Sciatic nerve (tissue), 2 donors: ENCODE measurements at regions of chr17 and their contacts with region 1.

Region 1: GRCh38 chr17:64129764-64130558 is at the start of gene ERN1:
- DNase-seq: peak; percentile 95
- ATAC-seq: peak; percentile 98
- total RNA-seq, gene ERN1: 22.2 TPM

Region 2: GRCh38 chr17:63881876-63882601 is 247.9 kb before region 1 on chr17 and contains the start of gene GH2:
- intact Hi-C with region 1: no loop called
- DNase-seq: no peak
- ATAC-seq: peak; percentile 60
- total RNA-seq, gene GH2: not detected

Region 3: DNA sequence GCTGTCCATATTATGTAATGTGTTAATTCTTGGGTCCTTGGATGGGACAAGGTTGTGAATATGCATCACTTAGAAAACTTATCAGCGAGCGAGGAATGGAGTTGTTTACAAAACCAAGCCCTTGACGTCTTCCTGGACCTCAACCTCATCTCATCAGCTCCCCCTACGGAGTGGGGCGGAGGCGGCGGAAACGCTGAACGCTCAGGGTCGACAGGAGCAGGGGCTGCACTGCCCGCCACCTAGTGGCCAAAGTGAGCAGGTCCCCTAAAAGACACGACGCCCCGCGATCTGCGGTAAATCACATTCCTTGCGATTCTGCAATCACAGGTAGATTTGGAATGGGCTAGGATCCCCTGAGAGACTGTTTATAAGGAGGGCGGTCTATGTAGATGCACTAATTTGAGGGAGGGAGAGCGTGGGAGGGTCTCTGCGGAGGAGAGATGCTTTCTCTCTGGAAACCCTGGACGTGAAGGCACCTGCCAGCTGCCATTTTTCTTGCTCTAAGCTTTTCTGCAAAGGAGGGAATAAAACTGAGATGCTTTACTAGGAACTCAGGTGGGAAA is 104.1 kb before region 1 on chr17:
- intact Hi-C with region 1: loop called (anchors 10 kb)
- DNase-seq: peak; percentile 83
- ATAC-seq: peak; percentile 84

Region 4: GRCh38 chr17:64063766-64064224 is 66.2 kb before region 1 on chr17:
- intact Hi-C with region 1: loop called (anchors 10 kb)
- DNase-seq: peak; percentile 71
- ATAC-seq: peak; percentile 69